Motor neuron (in vitro differentiated cells): ENCODE measurements at regions of chr9 and their contacts with region 1.

Region 1: DNA sequence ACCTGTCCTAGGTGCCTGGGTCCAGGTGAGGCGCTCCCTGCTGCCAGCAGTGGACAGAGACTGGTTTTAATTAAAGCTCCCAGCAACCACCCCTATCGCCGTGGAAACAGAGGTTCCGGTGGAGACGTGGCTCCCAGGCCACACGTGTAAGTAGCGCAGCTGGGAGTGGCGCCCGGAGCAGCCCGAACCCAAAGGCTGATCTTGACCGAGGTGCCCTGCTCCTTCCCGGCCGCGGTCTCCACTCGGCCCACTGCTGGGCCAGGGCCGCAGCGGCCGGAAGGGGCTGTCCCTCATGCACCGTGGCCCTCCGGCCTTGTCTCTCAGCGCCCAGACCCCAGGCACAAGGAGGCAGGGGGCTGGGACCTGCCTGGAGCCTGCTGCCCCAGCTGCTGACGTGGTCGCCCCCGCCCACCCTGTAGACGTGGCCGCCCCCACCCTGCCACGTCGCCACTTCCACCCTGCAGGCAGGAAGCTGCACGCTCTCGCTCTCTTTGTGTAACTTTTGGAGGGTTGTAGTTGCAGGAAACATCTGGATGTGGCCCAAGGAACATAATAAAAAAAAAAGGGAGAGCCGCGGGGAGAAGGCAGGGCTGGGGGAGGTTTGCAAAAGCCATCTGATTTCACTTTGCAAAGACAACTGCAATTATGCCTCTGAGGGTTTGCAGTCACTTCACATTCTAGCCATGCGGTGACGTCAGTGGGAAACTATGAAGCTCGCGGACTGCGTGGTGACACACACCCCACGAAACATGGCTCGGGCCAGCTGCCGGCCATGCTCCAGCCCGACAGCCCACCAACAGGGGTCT is 129.9 kb downstream of the RXRA start:
- ATAC-seq: peak; percentile 72 to 90 (median 82)
- H3K4me3 ChIP-seq: no peak overlapping the region
- H3K27ac ChIP-seq: peak overlapping the region; percentile 23 to 52
- H3K4me1 ChIP-seq: peaks cover 4 to 21% of the 10 kb centered on the region in 2 donors

Region 2: GRCh38 chr9:134592018-134592818 is 136.1 kb after region 1 on chr9:
- in situ Hi-C with region 1: no loop called
- ATAC-seq: peak in 7 of 8 experiments; percentile 42 to 89 (median 77)
- H3K4me3 ChIP-seq: no peak overlapping the region
- H3K27ac ChIP-seq: no peak overlapping the region
- H3K4me1 ChIP-seq: peaks cover 6% of the 10 kb centered on the region in 2 donors

Region 3: DNA sequence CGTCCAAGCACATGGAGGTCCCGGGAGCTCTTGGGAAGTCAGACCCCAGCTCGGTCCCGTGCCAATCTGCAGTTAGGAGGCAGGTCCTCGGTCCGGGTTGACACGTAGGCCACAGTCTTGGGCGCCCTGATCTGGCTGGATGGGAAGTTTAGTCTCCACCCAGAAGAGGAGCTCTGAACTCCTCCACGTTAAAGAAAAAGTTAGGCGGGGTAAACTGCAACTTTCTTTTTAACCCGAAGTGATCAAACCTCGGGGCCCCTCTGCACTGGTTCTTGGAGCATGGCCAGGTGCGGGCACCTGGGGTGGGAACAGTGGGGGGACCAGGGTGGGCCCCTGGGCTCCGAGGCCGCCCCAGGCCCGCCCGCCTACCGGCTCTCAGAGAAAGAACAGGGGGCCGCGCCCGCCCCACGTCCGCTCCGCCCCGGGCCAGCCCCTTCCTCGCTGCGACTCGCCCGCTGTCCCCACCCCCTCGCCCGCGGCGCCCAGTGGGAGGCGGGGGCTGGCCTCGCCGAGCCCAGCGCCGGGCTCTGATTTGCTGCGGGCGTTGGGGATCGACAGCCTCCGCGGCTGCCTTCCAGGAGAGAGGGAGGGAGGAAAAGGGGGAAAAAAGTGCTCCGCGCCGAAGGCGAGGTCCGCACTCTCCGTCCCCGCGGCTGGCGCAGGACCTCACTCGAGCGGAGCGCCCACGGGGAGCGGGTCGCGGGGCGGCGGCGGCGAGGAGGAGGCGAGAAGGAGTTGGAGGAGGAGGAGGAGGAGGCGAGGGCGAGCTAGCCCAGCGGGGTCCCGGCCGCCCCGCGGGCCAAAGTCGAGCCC is 185.2 kb after region 1 on chr9 and contains the start of gene COL5A1:
- in situ Hi-C with region 1: loop called in 1 of 9 experiments (anchors 25 kb)
- ATAC-seq: peak; percentile 64 to 89 (median 87)
- H3K4me3 ChIP-seq: peak within 1 kb of the TSS; percentile 26 to 46 (median 37)
- H3K27ac ChIP-seq: no peak within 1 kb of the TSS
- H3K4me1 ChIP-seq: peaks cover 20 to 34% of the 10 kb centered on the region in 2 donors
- total RNA-seq, gene COL5A1: 1.9 to 141 (median 3.6) TPM

Region 4: GRCh38 chr9:134698587-134699342 is 242.6 kb after region 1 on chr9:
- in situ Hi-C with region 1: loop called in 1 of 9 experiments (anchors 25 kb)
- ATAC-seq: peak; percentile 73 to 90 (median 87)
- H3K4me3 ChIP-seq: no peak overlapping the region
- H3K27ac ChIP-seq: no peak overlapping the region
- H3K4me1 ChIP-seq: peaks cover 4 to 5% of the 10 kb centered on the region in 2 donors

Region 5: DNA sequence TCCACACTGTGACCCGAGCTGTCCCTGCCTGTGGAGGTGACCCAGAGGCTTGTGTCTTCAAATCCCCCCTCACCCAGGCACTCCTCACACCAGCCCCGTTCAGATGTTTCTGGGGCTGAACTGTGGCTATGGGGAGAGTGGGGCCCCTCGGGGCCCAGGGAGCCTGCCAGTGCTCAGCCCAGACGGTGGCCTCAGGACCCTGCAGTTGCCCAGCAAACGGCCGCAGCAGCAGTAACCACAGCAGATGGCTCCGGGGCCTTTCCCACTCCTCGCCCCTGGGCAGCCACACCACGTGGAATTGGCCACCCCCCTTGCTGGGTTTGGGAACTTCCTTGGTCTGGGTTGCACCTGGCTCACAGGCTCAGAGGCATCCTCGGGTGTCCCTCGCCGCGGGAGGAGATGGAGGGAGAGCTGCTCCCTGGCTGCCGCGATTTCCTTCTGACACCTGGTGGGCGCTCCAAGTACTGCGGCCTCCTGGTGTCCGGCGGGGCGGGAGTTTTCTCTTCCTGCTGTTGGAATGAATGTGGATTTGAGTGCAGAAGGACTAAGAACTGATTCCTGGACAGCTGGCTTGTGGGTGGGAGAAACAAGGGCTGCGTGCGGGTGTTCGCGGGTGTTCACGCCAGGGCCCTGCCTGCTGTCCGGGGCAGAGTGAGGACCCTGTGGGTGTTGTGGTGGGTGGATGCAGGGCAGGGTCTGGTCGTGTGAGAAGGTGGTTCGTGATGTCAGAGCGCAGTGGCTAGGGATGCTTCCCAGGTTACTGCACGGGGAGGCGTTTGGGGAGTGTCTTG is 282.9 kb after region 1 on chr9:
- in situ Hi-C with region 1: loop called in 2 of 9 experiments (anchors 25 kb)
- ATAC-seq: peak; percentile 46 to 84 (median 80)
- H3K4me3 ChIP-seq: no peak overlapping the region
- H3K27ac ChIP-seq: no peak overlapping the region
- H3K4me1 ChIP-seq: peaks cover 31% of the 10 kb centered on the region in 2 donors